Gastrocnemius medialis (tissue), 4 donors: ENCODE measurements at regions of chr20 and their contacts with region 1.

Region 1: DNA sequence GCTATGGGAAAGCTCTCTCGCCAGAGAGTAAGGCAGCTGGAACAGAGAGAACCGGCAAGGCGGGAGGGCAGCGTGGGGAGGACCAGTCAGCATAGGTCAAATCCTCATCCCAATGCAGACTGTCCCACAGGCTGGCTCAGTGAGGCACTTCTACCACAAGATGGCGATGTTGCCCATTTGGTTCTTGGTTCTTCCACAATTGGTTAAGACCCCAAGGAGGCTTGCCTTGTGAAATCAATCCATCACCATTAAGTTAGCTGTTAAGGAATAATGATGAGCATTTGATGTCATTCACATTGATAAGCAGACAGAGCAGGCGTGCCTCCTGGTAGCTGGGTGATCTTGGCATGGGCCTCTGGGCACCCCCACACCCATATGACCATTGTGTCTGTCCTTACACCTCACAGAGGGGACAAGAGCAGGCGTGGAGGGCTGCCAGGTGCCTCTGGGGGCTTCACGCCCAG is 2.4 kb downstream of the CSTL1 start:
- DNase-seq: peak; percentile 35 to 51
- ATAC-seq: peak; percentile 75 to 87
- H3K4me3 ChIP-seq: no peak overlapping the region
- H3K27ac ChIP-seq: no peak overlapping the region
- H3K4me1 ChIP-seq: no peaks in the 10 kb centered on the region
- H3K27me3 ChIP-seq: no peaks in the 10 kb centered on the region
- CTCF ChIP-seq: peak; percentile 54 to 83 (median 71)
- POLR2A ChIP-seq: no peak

Region 2: GRCh38 chr20:23214903-23215302 is 227.0 kb before region 1 on chr20:
- in situ Hi-C with region 1: no loop called
- intact Hi-C with region 1: no loop called
- DNase-seq: no peak
- ATAC-seq: no peak
- H3K4me3 ChIP-seq: no peak overlapping the region
- H3K27ac ChIP-seq: no peak overlapping the region
- H3K4me1 ChIP-seq: no peaks in the 10 kb centered on the region
- H3K27me3 ChIP-seq: no peaks in the 10 kb centered on the region
- CTCF ChIP-seq: no peak
- POLR2A ChIP-seq: no peak

Region 3: GRCh38 chr20:23606652-23607049 is 164.8 kb after region 1 on chr20:
- in situ Hi-C with region 1: loop called in 2 of 4 experiments (anchors 10 kb)
- intact Hi-C with region 1: loop called (anchors 5 kb)
- DNase-seq: peak; percentile 54 to 68
- ATAC-seq: peak; percentile 87 to 95
- H3K4me3 ChIP-seq: no peak overlapping the region
- H3K27ac ChIP-seq: no peak overlapping the region
- H3K4me1 ChIP-seq: no peaks in the 10 kb centered on the region
- H3K27me3 ChIP-seq: no peaks in the 10 kb centered on the region
- CTCF ChIP-seq: peak; percentile 76 to 88 (median 81)
- POLR2A ChIP-seq: no peak

Region 4: GRCh38 chr20:23613676-23614075 is 171.8 kb after region 1 on chr20:
- in situ Hi-C with region 1: loop called in 2 of 4 experiments (anchors 10 kb)
- intact Hi-C with region 1: loop called (anchors 5 kb)
- DNase-seq: peak in 1 of 2 donors; percentile 19
- ATAC-seq: peak; percentile 41 to 64
- H3K4me3 ChIP-seq: no peak overlapping the region
- H3K27ac ChIP-seq: peak overlapping the region; percentile 20 to 54 (median 40)
- H3K4me1 ChIP-seq: peaks cover 0 to 8% of the 10 kb centered on the region in 2 donors
- H3K27me3 ChIP-seq: no peaks in the 10 kb centered on the region
- CTCF ChIP-seq: no peak
- POLR2A ChIP-seq: no peak

Region 5: GRCh38 chr20:23668477-23668951 is 226.6 kb after region 1 on chr20:
- in situ Hi-C with region 1: no loop called
- intact Hi-C with region 1: loop called (anchors 5 kb)
- DNase-seq: peak in 1 of 2 donors; percentile 56
- ATAC-seq: peak; percentile 85 to 87
- H3K4me3 ChIP-seq: no peak overlapping the region
- H3K27ac ChIP-seq: no peak overlapping the region
- H3K4me1 ChIP-seq: no peaks in the 10 kb centered on the region
- H3K27me3 ChIP-seq: no peaks in the 10 kb centered on the region
- CTCF ChIP-seq: peak; percentile 70 to 89 (median 84)
- POLR2A ChIP-seq: no peak

Region 6: DNA sequence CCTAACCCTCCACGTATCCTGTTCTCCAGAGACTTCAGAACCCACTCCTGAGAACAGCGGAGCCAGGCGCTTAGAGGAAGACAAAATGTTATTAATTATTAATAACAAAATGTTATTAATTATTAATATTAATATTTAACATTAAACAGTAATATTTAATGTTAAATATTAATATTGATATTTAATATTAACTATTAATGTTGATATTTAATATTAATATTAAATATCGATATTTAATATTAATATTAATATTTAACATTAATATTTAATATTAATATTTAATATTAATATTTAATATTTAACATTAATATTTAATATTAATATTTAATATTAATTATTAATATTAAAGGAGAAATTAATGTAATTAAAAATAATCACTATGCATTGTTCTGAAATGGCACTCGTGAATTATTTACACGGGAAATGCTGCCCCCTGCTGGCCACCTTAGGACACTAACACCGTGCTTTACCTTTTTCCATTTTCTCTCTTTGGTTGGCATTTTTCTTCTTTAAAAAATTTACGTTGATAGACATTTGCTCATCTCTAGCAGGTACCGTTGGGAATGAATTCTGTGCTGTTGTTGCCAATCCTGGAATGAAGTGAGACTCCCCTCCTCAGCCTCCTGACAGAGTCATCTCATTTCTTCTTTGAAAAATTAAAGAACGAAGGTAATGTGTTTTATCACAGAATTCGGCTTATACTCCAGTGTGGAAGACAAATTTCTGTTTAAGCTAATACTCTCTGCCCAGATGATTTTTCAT is 554.2 kb after region 1 on chr20:
- in situ Hi-C with region 1: loop called in 3 of 4 experiments (anchors 25 kb)
- intact Hi-C with region 1: loop called (anchors 5 kb)
- DNase-seq: no peak
- ATAC-seq: no peak
- H3K4me3 ChIP-seq: no peak overlapping the region
- H3K27ac ChIP-seq: no peak overlapping the region
- H3K4me1 ChIP-seq: no peaks in the 10 kb centered on the region
- H3K27me3 ChIP-seq: peaks cover 0 to 6% (median 0%) of the 10 kb centered on the region in 3 donors
- CTCF ChIP-seq: peak; percentile 40 to 84 (median 67)
- POLR2A ChIP-seq: no peak